ENCODE measurements at regions of chr4 and their contacts with region 1.

Region 1: DNA sequence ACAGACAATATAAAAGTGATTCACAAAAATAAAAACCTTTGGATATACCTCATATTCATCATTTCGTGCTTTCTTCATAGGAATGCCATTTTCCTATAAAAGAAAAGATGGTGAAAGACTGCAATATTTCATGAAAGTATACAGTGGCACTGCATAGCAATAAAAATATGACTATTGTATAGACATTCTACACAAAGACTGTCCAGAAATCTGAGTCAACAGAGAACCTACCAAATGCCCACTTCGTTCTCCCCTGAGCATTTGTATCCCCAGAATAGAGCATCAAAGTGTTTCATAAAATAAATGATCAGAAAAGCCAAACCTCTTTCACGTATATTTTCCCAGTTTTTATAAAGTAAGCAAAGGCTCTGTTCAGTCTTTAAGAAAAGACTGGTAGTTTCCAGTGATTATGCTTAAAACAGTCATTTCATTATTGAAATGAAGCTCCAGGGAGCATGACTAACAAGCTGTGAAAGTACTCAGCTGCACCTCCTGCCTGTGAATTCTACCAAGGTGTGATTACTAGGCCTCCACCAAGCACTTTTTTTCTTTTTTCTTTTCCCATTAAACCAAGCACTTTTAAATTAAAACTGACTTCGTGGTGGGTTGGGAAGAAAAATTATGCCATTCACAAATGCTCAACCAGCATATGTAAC is 20.2 kb downstream of the PPA2 start:
- DNase-seq: no peak
- ATAC-seq: peak; percentile 45
- H3K4me3 Mint-ChIP-seq: no peak overlapping the region
- H3K27ac Mint-ChIP-seq: no peak overlapping the region
- H3K4me1 Mint-ChIP-seq: peaks cover 6% of the 10 kb centered on the region
- H3K27me3 Mint-ChIP-seq: no peaks in the 10 kb centered on the region
- CTCF ChIP-seq: no peak

Region 2: GRCh38 chr4:105440890-105441289 is 12.8 kb before region 1 on chr4:
- CTCF ChIA-PET with region 1: no interaction called
- POLR2A ChIA-PET with region 1: no interaction called
- intact Hi-C with region 1: loop called (anchors 1 kb)
- DNase-seq: no peak
- ATAC-seq: no peak
- H3K4me3 Mint-ChIP-seq: no peak overlapping the region
- H3K27ac Mint-ChIP-seq: no peak overlapping the region
- H3K4me1 Mint-ChIP-seq: no peaks in the 10 kb centered on the region
- H3K27me3 Mint-ChIP-seq: no peaks in the 10 kb centered on the region
- CTCF ChIP-seq: no peak

Measured in activated B cell treated with CpG ODN at 0.5 μM for 24 hours (primary cell).